Activated T-helper 2 cell treated with anti-CD3 and anti-CD28 coated beads, Interferon-gamma antibody, Interleukin-2, Interleukin-4, amounts not matched to agents 10 μg/mL and 5 μg/mL and 100 μg/mL, durations not matched to agents 14 hours and 24 hours and 36 hours (primary cell): ENCODE measurements at regions of chr1 and their contacts with region 1.

Region 1: GRCh38 chr1:230109895-230110667 is 43.0 kb downstream of the GALNT2 start:
- DNase-seq: peak; percentile 56
- H3K4me3 Mint-ChIP-seq: peak overlapping the region; percentile 23
- H3K27ac Mint-ChIP-seq: peak overlapping the region; percentile 88
- H3K4me1 Mint-ChIP-seq: peaks cover 78% of the 10 kb centered on the region
- H3K27me3 Mint-ChIP-seq: no peaks in the 10 kb centered on the region

Region 2: DNA sequence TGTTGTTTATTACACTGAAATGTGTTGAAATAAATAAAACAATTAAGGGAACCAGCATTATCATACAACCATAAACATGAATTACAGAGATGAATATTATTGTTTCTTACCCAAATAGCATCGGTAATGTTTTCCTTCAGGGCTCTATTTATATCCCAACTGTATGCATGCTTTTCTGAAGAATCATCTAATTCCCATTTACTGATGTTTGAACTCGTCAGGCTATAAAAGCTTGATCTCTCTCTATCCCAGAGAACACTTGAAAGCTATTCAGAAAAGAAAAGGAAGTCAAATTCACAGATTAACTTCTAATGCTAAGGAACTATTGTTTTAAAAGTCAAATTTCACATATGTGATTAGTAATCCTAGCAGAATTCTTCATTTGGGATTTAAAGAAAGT is 614.3 kb before region 1 on chr1:
- intact Hi-C with region 1: no loop called
- DNase-seq: no peak
- H3K4me3 Mint-ChIP-seq: no peak overlapping the region
- H3K27ac Mint-ChIP-seq: no peak overlapping the region
- H3K4me1 Mint-ChIP-seq: no peaks in the 10 kb centered on the region
- H3K27me3 Mint-ChIP-seq: no peaks in the 10 kb centered on the region

Region 3: GRCh38 chr1:229928767-229929166 is 181.3 kb before region 1 on chr1:
- intact Hi-C with region 1: no loop called
- DNase-seq: no peak
- H3K4me3 Mint-ChIP-seq: no peak overlapping the region
- H3K27ac Mint-ChIP-seq: no peak overlapping the region
- H3K4me1 Mint-ChIP-seq: no peaks in the 10 kb centered on the region
- H3K27me3 Mint-ChIP-seq: peaks cover 27% of the 10 kb centered on the region

Region 4: DNA sequence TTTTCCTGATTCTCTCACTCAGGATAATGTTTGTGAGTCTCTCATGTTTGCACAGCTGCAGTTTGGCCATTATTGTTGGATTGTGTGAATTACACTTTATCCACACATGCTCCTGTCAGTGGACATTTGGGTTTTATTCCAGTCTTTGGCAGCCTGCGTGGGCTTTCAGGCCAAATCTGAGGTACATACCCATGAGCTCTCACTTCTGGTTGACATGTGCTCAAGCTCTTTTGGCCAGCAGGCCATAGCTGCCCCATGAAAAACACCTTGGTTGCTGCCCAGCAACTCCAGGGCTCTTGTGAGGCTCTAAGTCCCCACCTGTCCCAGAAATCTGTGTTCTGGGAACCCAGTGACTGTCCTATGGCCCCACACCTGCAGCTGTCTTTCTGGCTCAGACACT is 167.6 kb before region 1 on chr1:
- intact Hi-C with region 1: no loop called
- DNase-seq: no peak
- H3K4me3 Mint-ChIP-seq: no peak overlapping the region
- H3K27ac Mint-ChIP-seq: no peak overlapping the region
- H3K4me1 Mint-ChIP-seq: no peaks in the 10 kb centered on the region
- H3K27me3 Mint-ChIP-seq: peaks cover 2% of the 10 kb centered on the region

Region 5: GRCh38 chr1:230127105-230128054 is 17.3 kb after region 1 on chr1:
- intact Hi-C with region 1: loop called (anchors 1 kb)
- DNase-seq: peak; percentile 47
- H3K4me3 Mint-ChIP-seq: peak overlapping the region; percentile 53
- H3K27ac Mint-ChIP-seq: peak overlapping the region; percentile 70
- H3K4me1 Mint-ChIP-seq: peaks cover 62% of the 10 kb centered on the region
- H3K27me3 Mint-ChIP-seq: no peaks in the 10 kb centered on the region